ENCODE measurements at regions of chr14 and their contacts with region 1.

Region 1: DNA sequence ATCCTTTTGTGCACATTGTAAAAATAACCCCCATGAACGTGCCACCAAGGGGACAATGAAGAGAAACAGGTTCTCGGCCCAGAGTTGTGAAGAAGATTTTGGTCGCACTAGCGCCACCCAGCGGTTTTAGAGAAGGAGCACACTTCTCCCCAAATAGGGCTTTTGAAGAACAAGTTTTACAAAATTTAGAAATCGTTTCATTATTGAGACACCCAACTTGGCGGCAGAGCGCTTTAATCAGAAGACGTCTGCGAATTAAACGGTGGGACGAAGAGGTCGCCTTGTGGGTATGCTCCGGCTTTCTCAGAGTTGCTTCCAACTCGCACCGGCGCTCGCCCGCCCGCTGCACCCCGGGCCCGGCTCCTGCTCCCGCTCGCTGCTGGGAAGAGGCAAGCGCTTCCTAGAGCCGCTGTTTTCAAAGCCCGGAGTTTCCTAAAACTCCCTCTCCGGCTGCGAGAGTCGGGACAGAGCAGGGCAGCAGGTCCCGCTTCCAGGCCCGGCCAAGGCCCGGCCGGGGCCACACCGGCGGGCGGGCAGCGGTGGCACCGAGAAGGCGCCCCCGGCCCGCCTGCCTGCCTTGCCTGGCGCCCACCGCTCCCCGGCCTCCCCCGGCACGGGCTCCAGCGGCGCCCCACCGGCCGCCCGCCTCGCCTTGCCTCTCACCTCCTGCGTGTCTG is 673 bp downstream of the FOXA1 start:
- DNase-seq: peak; percentile 76
- ATAC-seq: peak; percentile 16 to 47
- H3K4me3 ChIP-seq: peak overlapping the region; percentile 60
- H3K27ac ChIP-seq: peak overlapping the region; percentile 82
- H3K4me1 ChIP-seq: peaks cover 28% of the 10 kb centered on the region
- H3K27me3 ChIP-seq: peaks cover 92% of the 10 kb centered on the region
- CTCF ChIP-seq: peak; percentile 68

Region 2: GRCh38 chr14:37246427-37246914 is 347.9 kb before region 1 on chr14:
- intact Hi-C with region 1: loop called (anchors 5 kb)
- DNase-seq: no peak
- ATAC-seq: peak; percentile 56 to 66
- H3K4me3 ChIP-seq: no peak overlapping the region
- H3K27ac ChIP-seq: no peak overlapping the region
- H3K4me1 ChIP-seq: no peaks in the 10 kb centered on the region
- H3K27me3 ChIP-seq: no peaks in the 10 kb centered on the region
- CTCF ChIP-seq: peak; percentile 81

Measured in lower lobe of right lung (tissue), 2 donors.